HepG2 (cell line): ENCODE measurements at regions of chr11 and their contacts with region 1.

Region 1: GRCh38 chr11:12043959-12044819 is 35.8 kb upstream of the DKK3 start:
- DNase-seq: peak; percentile 87
- ATAC-seq: peak; percentile 89
- H3K4me3 ChIP-seq: peak overlapping the region in 1 of 3 experiments; percentile 50; a peak in 2 of 6 replicates
- H3K27ac ChIP-seq: no peak overlapping the region
- H3K4me1 ChIP-seq: peaks cover 26% of the 10 kb centered on the region
- H3K27me3 ChIP-seq: no peaks in the 10 kb centered on the region; a peak in 1 of 5 replicates
- CTCF ChIP-seq: peak; percentile 94
- EP300 ChIP-seq: peak in 1 of 2 experiments; percentile 32; a peak in 1 of 4 replicates
- POLR2A ChIP-seq: no peak
- RAD21 ChIP-seq: peak; percentile 82

Region 2: GRCh38 chr11:11931461-11932055 is 112.6 kb before region 1 on chr11:
- CTCF ChIA-PET with region 1: interaction called, 23 read pairs
- POLR2A ChIA-PET with region 1: no interaction called
- in situ Hi-C with region 1: loop called (anchors 5 kb)
- intact Hi-C with region 1: loop called (anchors 1 kb)
- DNase-seq: peak; percentile 62
- ATAC-seq: peak; percentile 88
- H3K4me3 ChIP-seq: no peak overlapping the region
- H3K27ac ChIP-seq: no peak overlapping the region
- H3K4me1 ChIP-seq: no peaks in the 10 kb centered on the region
- H3K27me3 ChIP-seq: no peaks in the 10 kb centered on the region
- CTCF ChIP-seq: peak; percentile 62
- EP300 ChIP-seq: no peak
- POLR2A ChIP-seq: no peak
- RAD21 ChIP-seq: 0 out of 2 replicates have a peak, but pooled peaks have one; percentile 20

Region 3: DNA sequence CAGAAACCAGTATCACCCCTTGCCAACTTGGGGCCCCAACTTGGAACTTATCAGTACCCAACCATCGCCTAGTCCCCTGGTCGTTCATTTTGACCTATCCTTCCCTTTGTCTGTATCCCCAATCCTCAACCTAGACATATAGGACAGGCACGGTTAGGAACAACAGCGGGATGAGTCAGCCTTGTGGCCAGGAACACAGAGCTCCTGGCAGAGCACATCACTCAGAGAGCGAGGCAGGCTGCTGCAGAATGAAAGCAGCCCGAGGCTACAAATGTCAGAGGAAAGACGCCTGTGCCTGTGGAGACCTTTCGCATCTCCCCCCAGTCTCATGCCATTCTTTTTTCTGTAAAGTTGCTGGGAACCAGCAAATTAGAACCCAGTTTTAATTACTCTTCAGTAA is 50.4 kb before region 1 on chr11:
- CTCF ChIA-PET with region 1: no interaction called
- POLR2A ChIA-PET with region 1: no interaction called
- in situ Hi-C with region 1: no loop called
- intact Hi-C with region 1: loop called (anchors 2 kb)
- DNase-seq: no peak
- ATAC-seq: peak; percentile 60
- H3K4me3 ChIP-seq: no peak overlapping the region
- H3K27ac ChIP-seq: no peak overlapping the region
- H3K4me1 ChIP-seq: peaks cover 36% of the 10 kb centered on the region
- H3K27me3 ChIP-seq: peaks cover 0 to 32% of the 10 kb centered on the region in 2 experiments; a peak in 4 of 5 replicates
- CTCF ChIP-seq: no peak
- EP300 ChIP-seq: no peak
- POLR2A ChIP-seq: no peak
- RAD21 ChIP-seq: no peak

Region 4: DNA sequence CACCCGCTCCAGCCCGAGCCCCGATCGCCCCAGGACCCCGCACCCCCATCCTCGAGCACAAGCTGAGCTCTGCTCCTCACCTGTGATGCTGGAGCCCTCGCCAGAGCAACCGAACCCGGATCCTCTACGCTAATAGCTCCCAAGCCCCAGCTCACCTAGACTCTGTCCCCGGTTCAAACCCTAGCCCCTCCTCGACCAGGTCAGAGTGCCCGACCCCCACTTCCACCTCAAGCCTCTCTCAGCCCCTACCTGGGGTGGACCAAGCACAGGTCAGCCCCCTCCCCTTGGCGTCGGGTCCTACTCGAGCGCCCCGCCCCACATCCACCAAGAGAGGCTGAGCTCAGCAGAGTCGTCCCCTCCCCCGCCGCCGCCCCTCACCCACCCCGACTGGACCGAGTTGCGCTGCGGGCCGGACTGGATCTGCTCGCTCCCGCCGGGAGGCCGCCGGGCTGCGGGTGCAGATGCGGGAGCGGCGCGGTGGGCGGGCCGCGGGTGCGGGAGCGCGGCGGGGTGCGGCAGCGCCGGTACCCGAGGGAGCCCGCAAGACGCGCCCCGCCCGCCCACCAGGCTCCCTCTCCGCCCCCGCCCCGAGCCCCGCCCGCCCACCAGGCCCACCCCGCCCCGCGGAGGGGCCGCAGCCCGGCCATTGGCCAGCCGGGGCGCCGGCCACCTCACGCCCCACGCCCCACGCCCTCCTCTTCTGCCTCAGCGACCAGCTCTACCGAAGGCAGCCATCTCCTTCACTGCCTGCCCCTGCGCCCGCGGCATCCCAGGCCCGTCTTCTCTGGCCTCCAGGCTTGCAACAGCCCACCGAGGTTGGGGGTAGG is 35.2 kb before region 1 on chr11:
- CTCF ChIA-PET with region 1: no interaction called
- POLR2A ChIA-PET with region 1: no interaction called
- in situ Hi-C with region 1: no loop called
- intact Hi-C with region 1: no loop called
- DNase-seq: no peak
- ATAC-seq: peak; percentile 52; the same call in 2 of the 3 replicates
- H3K4me3 ChIP-seq: peak overlapping the region; percentile 16 to 64 (median 39); a peak in 3 of 6 replicates
- H3K27ac ChIP-seq: no peak overlapping the region
- H3K4me1 ChIP-seq: no peaks in the 10 kb centered on the region
- H3K27me3 ChIP-seq: peaks cover 6 to 43% of the 10 kb centered on the region in 2 experiments
- CTCF ChIP-seq: no peak
- EP300 ChIP-seq: no peak
- POLR2A ChIP-seq: no peak
- RAD21 ChIP-seq: no peak